Naive thymus-derived CD8-positive, alpha-beta T cell (primary cell): ENCODE measurements at regions of chr3 and their contacts with region 1.

Region 1: GRCh38 chr3:184185461-184186308 is at the start of gene ABCF3:
- DNase-seq: peak; percentile 93 to 100 (median 99)
- ATAC-seq: peak; percentile 92 to 93
- H3K4me3 Mint-ChIP-seq: peak within 1 kb of the TSS; percentile 94 to 99 (median 97)
- H3K27ac Mint-ChIP-seq: peak within 1 kb of the TSS; percentile 89 to 99 (median 98)
- H3K4me1 Mint-ChIP-seq: peaks cover 22 to 54% (median 37%) of the 10 kb centered on the region in 4 donors
- H3K27me3 Mint-ChIP-seq: no peaks in the 10 kb centered on the region
- polyA plus RNA-seq, gene ABCF3: 35.2 to 56.3 (median 37.6) TPM

Region 2: DNA sequence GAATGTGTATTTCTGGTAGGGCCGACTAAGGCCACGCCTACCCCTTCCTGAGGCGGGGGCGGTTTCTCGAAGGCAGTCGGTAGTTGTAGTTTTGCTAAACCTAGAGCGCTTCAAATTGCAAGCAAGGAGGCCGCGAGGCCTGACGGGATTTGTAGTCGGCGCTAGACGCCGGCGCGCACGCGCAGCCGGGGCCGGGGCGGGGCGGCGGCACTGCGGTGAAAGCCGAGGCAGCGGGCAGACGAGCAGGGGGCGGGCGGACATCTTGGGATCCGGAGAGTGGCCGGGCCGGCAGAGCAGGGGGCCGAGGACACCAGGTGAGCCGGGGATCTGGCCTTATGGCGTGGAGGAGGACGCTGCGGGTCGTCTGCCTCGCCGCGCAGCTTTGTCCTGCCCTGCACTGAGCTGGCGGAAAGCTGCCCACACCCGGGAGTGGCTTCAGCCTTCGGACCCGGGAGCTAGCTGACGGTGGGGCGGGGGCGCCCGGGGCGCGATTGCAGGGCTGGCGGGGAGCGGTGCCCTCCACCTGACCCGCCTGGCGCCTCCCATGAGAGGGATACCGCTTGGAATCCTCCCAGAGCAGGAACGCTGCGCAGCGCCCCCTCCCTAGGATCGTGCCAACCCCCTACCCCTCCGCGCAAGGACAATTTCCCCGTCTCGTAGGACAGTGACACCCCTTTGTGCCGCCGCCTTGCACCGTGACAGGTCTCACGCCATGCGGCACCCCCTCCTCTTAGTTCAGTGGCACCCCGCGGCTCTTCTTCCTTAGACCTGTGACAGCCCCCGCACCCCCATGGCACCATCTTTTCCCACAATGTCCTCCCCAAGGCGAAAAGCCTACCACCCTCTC is 10.8 kb before region 1 on chr3 and contains the start of gene AP2M1:
- POLR2A ChIA-PET with region 1: interaction called, 29 read pairs
- DNase-seq: peak; percentile 95 to 99 (median 97)
- ATAC-seq: peak; percentile 94 to 98
- H3K4me3 Mint-ChIP-seq: peak within 1 kb of the TSS; percentile 89 to 98 (median 96)
- H3K27ac Mint-ChIP-seq: peak within 1 kb of the TSS; percentile 48 to 95 (median 92)
- H3K4me1 Mint-ChIP-seq: peaks cover 18 to 42% (median 37%) of the 10 kb centered on the region in 4 donors
- H3K27me3 Mint-ChIP-seq: no peaks in the 10 kb centered on the region
- polyA plus RNA-seq, gene AP2M1: 210 to 271 (median 234) TPM

Region 3: DNA sequence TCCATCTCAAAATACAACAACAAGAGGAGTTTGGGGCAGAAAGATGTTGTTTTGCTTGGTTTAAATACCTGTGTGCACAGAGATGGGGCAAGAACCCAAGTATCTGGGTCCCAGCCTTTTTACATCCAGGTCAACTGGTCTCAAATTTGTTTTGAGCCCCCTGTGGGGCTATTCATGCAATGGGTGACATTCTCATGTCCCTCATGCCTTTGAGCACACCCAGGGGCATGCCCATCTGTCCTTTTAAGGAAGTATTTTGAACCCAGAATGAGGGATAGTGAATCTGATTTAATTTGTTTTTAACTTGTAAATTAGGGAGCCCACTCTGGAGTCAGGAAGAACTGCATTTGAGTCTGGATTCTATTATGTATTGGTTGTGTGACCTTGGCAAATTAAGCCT is 15.1 kb after region 1 on chr3:
- POLR2A ChIA-PET with region 1: no interaction called
- DNase-seq: no peak
- ATAC-seq: no peak
- H3K4me3 Mint-ChIP-seq: no peak overlapping the region
- H3K27ac Mint-ChIP-seq: no peak overlapping the region
- H3K4me1 Mint-ChIP-seq: peaks cover 0 to 3% (median 0%) of the 10 kb centered on the region in 4 donors
- H3K27me3 Mint-ChIP-seq: peaks cover 2 to 5% (median 4%) of the 10 kb centered on the region in 5 donors

Region 4: DNA sequence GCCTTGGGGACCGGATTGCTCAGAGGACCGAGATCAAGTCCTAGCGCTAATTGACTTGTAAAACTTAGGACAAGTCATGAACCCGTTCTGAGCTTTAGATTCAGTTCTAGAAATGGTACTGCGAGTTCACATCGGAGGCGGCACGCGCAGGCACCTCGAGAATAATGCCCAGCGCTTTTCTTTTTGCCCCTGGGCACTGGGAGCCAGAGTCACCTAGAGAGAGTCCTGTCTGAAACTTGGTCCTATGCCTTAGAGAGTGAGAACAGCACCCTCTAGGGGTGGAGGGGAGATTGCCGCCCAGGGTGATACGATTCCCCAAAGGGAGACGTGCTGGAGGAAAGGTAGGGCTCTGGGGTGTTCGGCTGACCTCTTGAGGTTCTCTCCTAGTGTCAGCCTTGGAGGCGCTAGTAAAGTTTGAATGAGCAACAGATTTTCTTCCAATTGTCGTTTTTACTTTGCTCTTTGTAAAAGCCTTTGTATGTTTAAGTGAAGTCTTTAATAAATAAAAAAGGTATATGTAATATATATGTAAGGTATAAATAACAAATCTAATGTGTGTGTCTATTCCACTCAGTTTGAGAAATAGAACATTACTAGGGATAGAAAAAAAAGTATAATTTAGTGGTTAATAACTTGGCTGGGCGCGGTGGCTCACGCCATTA is 64.6 kb after region 1 on chr3:
- POLR2A ChIA-PET with region 1: no interaction called
- DNase-seq: peak; percentile 71 to 92 (median 85)
- ATAC-seq: peak; percentile 65 to 67
- H3K4me3 Mint-ChIP-seq: peak overlapping the region; percentile 94 to 100 (median 96)
- H3K27ac Mint-ChIP-seq: peak overlapping the region; percentile 36 to 98 (median 94)
- H3K4me1 Mint-ChIP-seq: peaks cover 15 to 26% (median 19%) of the 10 kb centered on the region in 4 donors
- H3K27me3 Mint-ChIP-seq: no peaks in the 10 kb centered on the region

Region 5: GRCh38 chr3:184289426-184289938 is 103.8 kb after region 1 on chr3:
- POLR2A ChIA-PET with region 1: no interaction called
- DNase-seq: peak; percentile 12 to 67 (median 46)
- ATAC-seq: peak; percentile 53 to 80
- H3K4me3 Mint-ChIP-seq: no peak overlapping the region
- H3K27ac Mint-ChIP-seq: peak overlapping the region in 1 of 10 donors; percentile 22
- H3K4me1 Mint-ChIP-seq: no peaks in the 10 kb centered on the region
- H3K27me3 Mint-ChIP-seq: peaks cover 12 to 33% (median 18%) of the 10 kb centered on the region in 5 donors